Dorsolateral prefrontal cortex (tissue), 120 donors: ENCODE measurements at regions of chr17 and their contacts with region 1.

Region 1: DNA sequence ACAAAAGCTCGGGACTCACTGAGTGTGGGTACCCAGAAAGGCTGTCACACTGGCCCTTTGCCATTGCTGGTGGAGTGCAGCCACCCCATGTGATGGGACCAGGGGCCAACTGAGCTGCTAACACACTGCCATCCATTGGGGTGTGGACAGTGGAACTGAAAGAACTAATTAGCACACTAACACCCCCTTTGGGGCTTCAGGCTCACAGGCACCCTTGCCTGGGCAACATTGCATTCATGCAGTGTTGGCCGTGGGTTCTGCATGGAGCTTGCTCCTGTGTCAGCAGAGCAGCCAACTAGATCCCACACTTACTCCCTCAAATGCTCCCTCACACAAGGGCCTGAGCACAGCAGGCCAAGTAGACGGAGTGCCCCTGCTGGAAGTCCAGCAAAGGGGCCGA is 476.0 kb upstream of the ASIC2 start:
- DNase-seq: peak in 1 of 10 donors; percentile 14
- H3K4me3 ChIP-seq: no peak overlapping the region
- H3K27ac ChIP-seq: no peak overlapping the region
- H3K27me3 ChIP-seq: peaks cover 0 to 11% (median 0%) of the 10 kb centered on the region in 45 donors
- CTCF ChIP-seq: no peak

Region 2: GRCh38 chr17:33234930-33235685 is 534.0 kb before region 1 on chr17:
- intact Hi-C with region 1: no loop called
- DNase-seq: peak; percentile 22 to 82 (median 70)
- H3K4me3 ChIP-seq: no peak overlapping the region
- H3K27ac ChIP-seq: peak overlapping the region in 9 of 59 donors; percentile 5 to 86 (median 18)
- H3K27me3 ChIP-seq: no peaks in the 10 kb centered on the region
- CTCF ChIP-seq: no peak

Region 3: GRCh38 chr17:33602981-33603380 is 166.1 kb before region 1 on chr17:
- intact Hi-C with region 1: no loop called
- DNase-seq: no peak
- H3K4me3 ChIP-seq: no peak overlapping the region
- H3K27ac ChIP-seq: no peak overlapping the region
- H3K27me3 ChIP-seq: peaks cover 0 to 9% (median 0%) of the 10 kb centered on the region in 45 donors
- CTCF ChIP-seq: no peak

Region 4: GRCh38 chr17:33832262-33832661 is 63.2 kb after region 1 on chr17:
- intact Hi-C with region 1: loop called in 1 of 2 experiments (anchors 10 kb)
- DNase-seq: no peak
- H3K4me3 ChIP-seq: no peak overlapping the region
- H3K27ac ChIP-seq: no peak overlapping the region
- H3K27me3 ChIP-seq: peaks cover 0 to 5% (median 0%) of the 10 kb centered on the region in 45 donors
- CTCF ChIP-seq: no peak